ENCODE measurements at regions of chr9 and their contacts with region 1.

Region 1: DNA sequence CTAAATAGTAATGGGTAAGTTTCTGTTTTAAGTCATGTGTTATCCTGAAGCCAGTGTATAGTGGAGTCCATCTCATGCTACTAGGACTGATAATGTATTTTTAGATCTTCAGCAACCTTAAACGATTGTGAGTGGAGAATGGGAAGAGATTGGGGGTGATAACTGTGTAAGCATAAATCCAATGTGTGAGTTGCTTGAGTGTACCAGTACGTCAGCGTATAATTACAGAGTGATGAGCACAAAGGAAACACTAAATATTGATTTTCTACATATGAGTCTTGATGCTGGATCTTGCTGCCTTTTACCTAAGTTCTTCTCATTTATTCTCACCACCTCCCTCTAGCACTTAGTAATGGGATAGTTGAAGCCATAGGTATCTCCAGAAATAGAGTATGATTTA is 16.3 kb upstream of the IZUMO3 start:
- DNase-seq: no peak
- H3K4me3 ChIP-seq: no peak overlapping the region
- CTCF ChIP-seq: no peak
- POLR2A ChIP-seq: no peak

Region 2: GRCh38 chr9:24132244-24132643 is 429.7 kb before region 1 on chr9:
- intact Hi-C with region 1: loop called (anchors 10 kb)
- DNase-seq: no peak
- H3K4me3 ChIP-seq: no peak overlapping the region
- CTCF ChIP-seq: no peak
- POLR2A ChIP-seq: no peak

Region 3: DNA sequence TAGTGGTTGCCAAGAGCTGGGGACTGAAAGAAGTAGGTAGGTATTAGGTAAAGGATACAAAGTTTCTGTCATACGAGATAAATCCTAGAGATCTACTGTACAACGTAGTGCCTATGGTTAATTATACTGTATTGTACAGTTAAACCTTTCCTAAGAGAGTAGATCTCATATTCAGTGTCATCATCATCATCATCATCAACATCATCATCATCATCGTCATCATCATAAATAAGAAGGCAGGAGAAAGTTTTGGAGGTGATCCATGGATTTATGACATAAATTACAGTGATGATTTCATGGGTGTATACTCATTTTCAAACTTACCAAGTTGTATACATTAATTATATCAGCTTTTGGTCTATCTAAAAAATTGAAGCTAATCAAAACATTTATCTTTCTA is 253.9 kb before region 1 on chr9:
- intact Hi-C with region 1: no loop called
- DNase-seq: no peak
- H3K4me3 ChIP-seq: no peak overlapping the region
- CTCF ChIP-seq: no peak
- POLR2A ChIP-seq: no peak

Region 4: GRCh38 chr9:24912767-24913166 is 350.8 kb after region 1 on chr9:
- intact Hi-C with region 1: no loop called
- DNase-seq: no peak
- H3K4me3 ChIP-seq: no peak overlapping the region
- CTCF ChIP-seq: no peak
- POLR2A ChIP-seq: no peak